ENCODE measurements at regions of chr7 and their contacts with region 1.

Region 1: DNA sequence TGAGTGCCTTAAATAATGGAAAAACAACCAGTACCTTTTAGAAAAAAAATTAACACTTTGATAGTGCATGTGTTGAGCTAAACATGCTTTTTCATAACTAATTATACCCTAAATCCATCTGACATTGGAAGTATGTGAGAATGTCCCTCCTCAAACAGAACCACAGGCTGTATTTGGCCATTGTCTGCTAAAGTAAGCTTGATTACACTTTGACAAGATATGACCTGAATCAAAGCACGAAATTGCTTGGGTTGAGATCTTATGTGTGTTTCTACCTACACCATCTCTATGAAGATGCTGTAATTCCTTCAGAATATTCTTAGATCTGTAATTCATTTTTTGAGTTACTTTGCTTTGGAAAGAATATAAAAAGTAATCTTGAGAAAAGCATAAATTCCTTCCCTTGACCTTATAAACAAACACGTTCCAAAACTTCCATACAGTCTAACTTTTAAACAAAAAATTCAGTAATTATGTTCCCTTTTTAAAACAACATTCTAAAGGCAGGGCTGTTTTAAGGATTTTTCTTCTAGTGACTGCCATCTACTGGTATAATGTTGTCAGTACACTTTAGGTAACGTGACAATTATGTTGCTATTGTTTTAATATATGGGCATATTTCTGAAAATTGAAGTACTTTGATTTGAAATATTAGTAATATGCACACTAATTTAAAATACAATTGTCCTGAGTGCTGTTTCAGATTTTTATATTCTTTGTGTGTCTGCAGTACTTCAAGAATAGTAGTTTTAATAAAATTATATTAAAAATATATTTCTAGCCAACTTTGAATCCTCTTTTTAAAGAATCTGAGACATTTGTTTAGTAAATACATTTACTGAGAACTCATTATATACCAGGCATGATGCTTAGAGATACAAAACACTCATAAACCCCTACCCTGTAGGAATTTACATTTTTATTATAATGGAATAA is 20.9 kb downstream of the CD36 start:
- DNase-seq: no peak
- H3K4me3 ChIP-seq: no peak overlapping the region
- H3K27ac ChIP-seq: no peak overlapping the region
- H3K4me1 ChIP-seq: no peaks in the 10 kb centered on the region
- H3K27me3 ChIP-seq: no peaks in the 10 kb centered on the region
- CTCF ChIP-seq: peak; percentile 52 to 83 (median 70)
- EP300 ChIP-seq: no peak
- POLR2A ChIP-seq: no peak

Region 2: GRCh38 chr7:80060218-80060806 is 599.1 kb before region 1 on chr7:
- in situ Hi-C with region 1: loop called in 1 of 4 experiments (anchors 25 kb)
- intact Hi-C with region 1: no loop called
- DNase-seq: no peak
- H3K4me3 ChIP-seq: no peak overlapping the region
- H3K27ac ChIP-seq: no peak overlapping the region
- H3K4me1 ChIP-seq: no peaks in the 10 kb centered on the region
- H3K27me3 ChIP-seq: no peaks in the 10 kb centered on the region
- CTCF ChIP-seq: peak; percentile 54 to 61 (median 58)
- EP300 ChIP-seq: no peak
- POLR2A ChIP-seq: no peak

Region 3: DNA sequence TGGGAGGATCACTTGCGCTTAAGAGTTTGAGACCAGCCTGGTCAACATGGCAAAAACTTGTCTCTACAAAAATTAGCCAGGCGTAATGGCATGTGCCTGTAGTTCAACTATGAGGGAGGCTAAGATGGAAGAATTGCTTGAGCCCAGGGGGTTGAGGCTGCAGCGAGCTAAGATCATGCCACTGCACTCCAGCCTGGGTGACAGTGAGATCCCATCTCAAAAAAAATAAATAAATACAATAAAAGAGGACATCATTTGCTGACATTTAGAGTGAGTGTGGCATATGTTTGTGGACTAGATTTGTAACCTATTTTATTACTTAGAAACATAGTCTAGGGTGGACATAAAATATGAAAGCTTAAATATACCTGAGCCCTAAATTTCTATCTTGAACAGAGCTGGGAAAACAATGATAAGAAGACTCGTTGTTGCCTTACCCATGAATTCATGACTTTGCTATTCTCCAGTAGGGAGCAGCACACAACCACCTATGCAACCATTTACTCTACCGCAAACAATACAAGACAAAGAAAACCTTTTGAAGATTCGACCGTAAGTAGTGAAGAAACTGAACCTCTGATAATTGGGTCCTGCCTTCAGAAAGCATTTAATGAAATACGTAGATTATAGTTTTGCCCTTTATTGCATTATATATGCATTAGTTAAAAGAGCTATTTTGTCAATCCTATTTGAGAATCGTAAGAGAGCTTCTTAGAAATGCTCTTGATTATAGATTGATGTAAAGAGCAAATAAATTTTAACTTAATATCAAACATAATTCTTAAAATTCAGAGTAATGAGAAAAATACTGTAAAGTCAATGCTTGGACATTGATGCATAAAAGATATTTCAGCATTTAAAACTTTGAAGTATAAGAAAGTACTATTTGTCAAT is 231.0 kb before region 1 on chr7:
- in situ Hi-C with region 1: loop called in 3 of 4 experiments (anchors 10 kb)
- intact Hi-C with region 1: loop called (anchors 5 kb)
- DNase-seq: no peak
- H3K4me3 ChIP-seq: no peak overlapping the region
- H3K27ac ChIP-seq: no peak overlapping the region
- H3K4me1 ChIP-seq: peaks cover 0 to 3% (median 0%) of the 10 kb centered on the region in 4 donors
- H3K27me3 ChIP-seq: no peaks in the 10 kb centered on the region
- CTCF ChIP-seq: peak; percentile 53 to 73 (median 65)
- EP300 ChIP-seq: no peak
- POLR2A ChIP-seq: no peak

Region 4: DNA sequence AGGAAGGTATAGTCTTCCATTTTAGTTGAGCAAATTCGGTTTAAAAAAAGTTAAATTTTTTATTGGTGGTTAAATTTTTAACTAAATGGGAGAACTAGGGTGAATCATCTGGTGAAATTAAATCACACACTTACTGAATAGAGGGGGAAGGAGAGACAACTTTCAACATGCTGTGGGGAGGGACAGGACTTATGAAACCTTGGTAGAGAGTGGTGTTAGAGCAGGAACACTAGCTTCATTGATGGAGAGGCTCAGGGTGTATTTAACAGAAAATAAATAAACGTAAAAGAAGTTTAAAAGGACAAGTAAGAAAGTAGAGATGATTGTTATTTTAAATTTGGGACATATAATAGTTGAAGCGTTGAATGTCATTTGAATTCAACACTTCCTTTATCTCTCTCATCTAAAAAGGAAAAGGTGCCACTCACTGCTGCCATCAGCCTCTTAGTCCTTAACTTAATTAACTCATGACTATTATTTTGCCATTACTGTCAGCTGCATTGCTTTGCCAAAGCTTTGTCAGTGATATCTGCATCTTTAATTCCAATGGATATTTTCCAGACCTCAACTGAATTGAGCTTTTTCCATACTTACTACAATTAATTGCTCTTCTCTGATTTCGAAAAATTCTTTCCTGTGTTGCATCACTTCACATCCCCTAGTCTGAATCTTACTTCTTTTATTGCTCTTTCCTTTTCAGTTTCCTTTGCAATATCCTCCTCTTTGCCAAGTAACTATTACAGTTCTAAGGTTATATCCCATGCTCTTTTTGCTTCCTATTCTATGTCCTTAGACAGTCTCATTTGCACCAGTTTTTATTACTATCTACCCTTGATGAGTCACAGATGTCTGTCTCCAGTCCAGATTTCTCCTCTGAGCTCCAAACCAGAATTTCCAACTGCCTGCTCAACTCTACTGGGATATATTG is 219.2 kb before region 1 on chr7:
- in situ Hi-C with region 1: loop called in 1 of 4 experiments (anchors 10 kb)
- intact Hi-C with region 1: no loop called
- DNase-seq: no peak
- H3K4me3 ChIP-seq: no peak overlapping the region
- H3K27ac ChIP-seq: no peak overlapping the region
- H3K4me1 ChIP-seq: peaks cover 0 to 10% (median 1%) of the 10 kb centered on the region in 4 donors
- H3K27me3 ChIP-seq: no peaks in the 10 kb centered on the region
- CTCF ChIP-seq: no peak
- EP300 ChIP-seq: no peak
- POLR2A ChIP-seq: no peak

Region 5: GRCh38 chr7:81562581-81562980 is 903.2 kb after region 1 on chr7:
- in situ Hi-C with region 1: no loop called
- intact Hi-C with region 1: no loop called
- DNase-seq: no peak
- H3K4me3 ChIP-seq: no peak overlapping the region
- H3K27ac ChIP-seq: no peak overlapping the region
- H3K4me1 ChIP-seq: no peaks in the 10 kb centered on the region
- H3K27me3 ChIP-seq: no peaks in the 10 kb centered on the region
- CTCF ChIP-seq: no peak
- EP300 ChIP-seq: no peak
- POLR2A ChIP-seq: no peak

Measured in transverse colon (tissue), 4 donors.